Naive thymus-derived CD4-positive, alpha-beta T cell (primary cell): ENCODE measurements at regions of chr3 and their contacts with region 1.

Region 1: GRCh38 chr3:59575113-59576001 is 525.5 kb upstream of the CFAP20DC start:
- DNase-seq: peak; percentile 68 to 92 (median 82)
- ATAC-seq: peak; percentile 86
- H3K4me3 ChIP-seq: no peak overlapping the region
- H3K4me3 Mint-ChIP-seq: peak overlapping the region in 1 of 10 donors; percentile 37
- H3K27ac ChIP-seq: no peak overlapping the region
- H3K27ac Mint-ChIP-seq: peak overlapping the region in 1 of 9 donors; percentile 65
- H3K4me1 ChIP-seq: peaks cover 0 to 3% of the 10 kb centered on the region in 2 donors
- H3K4me1 Mint-ChIP-seq: peaks cover 3 to 20% (median 11%) of the 10 kb centered on the region in 7 donors
- H3K27me3 ChIP-seq: no peaks in the 10 kb centered on the region
- H3K27me3 Mint-ChIP-seq: peaks cover 0 to 2% (median 0%) of the 10 kb centered on the region in 5 donors

Region 2: DNA sequence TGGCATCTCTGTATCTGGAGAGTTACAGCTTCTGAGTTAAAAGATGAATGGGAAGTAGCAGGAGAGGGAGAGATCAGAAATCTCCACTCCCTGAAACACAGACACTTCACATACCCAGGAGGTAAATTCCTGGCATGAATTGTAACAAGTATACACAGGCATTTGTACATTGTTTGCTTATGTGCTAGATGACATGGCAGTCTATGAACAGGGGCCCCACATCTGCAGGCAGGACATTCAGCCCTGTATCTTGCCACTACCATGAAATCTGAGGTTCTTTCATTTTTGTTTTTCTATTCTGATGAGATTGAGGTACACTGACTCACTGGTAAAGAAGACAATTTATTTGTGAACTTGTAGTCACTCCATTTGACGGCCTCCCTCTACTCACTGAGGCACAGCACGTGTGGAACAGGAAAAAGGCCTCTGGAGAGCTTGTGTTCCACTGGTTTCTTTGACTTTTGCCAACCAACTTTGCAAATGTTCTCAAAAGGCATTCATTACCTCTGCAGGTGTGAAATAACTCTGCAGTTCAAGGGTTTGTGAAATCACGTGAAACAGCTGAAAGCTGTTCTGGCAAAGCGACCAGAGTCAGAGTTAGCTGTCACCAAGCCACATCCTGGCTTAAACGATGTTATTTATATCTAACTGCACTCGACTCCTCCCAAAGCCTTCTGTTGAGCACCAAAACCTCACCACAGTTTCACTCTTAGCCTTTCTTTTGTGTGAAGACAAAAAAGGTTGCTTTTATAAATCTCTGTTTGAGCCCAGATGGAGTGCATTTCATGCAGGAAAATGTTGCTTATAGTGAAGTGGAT is 124.2 kb before region 1 on chr3:
- CTCF ChIA-PET with region 1: no interaction called
- POLR2A ChIA-PET with region 1: no interaction called
- intact Hi-C with region 1: loop called (anchors 2 to 5 kb)
- DNase-seq: peak in 8 of 9 donors; percentile 58 to 93 (median 86)
- ATAC-seq: peak; percentile 95
- H3K4me3 ChIP-seq: peak overlapping the region; percentile 30
- H3K4me3 Mint-ChIP-seq: peak overlapping the region; percentile 59 to 83 (median 77)
- H3K27ac ChIP-seq: peak overlapping the region; percentile 76
- H3K27ac Mint-ChIP-seq: peak overlapping the region; percentile 90 to 100 (median 97)
- H3K4me1 ChIP-seq: peaks cover 45 to 72% of the 10 kb centered on the region in 2 donors
- H3K4me1 Mint-ChIP-seq: peaks cover 52 to 94% (median 79%) of the 10 kb centered on the region in 7 donors
- H3K27me3 ChIP-seq: no peaks in the 10 kb centered on the region
- H3K27me3 Mint-ChIP-seq: no peaks in the 10 kb centered on the region

Region 3: DNA sequence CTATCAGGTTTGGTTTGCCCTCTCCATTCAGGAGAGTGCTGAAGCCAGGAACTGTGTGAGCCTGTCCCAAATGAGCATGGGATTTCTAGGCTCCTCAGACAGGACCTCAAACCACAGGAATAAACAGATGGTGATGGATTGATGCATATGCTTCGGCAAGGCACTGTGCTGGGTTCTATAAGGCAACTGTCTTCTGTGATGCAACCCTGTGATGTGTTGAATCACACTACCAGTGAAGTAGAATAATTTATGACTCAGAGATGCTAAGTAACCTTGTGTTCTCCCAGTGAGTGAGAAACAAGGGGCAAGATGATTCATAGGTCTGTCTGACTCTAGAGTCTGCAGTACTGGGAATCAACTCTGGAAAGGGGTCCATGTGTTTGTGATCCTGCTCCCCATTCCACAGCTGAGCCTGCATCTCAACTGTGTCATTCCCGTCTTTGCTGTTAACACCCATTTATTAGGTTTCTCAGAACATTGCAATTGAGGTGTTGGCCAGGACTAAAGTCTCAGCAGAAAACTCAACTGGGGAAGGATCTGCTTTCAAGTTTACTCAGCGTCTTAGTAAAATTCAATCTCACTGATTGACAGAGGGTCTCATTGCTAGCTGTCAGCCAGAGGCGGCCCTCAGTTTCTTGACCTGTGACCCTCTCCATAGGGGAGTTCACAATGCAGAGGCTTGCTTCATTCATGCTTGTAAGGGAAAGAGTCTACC is 15.5 kb before region 1 on chr3:
- CTCF ChIA-PET with region 1: no interaction called
- POLR2A ChIA-PET with region 1: no interaction called
- intact Hi-C with region 1: no loop called
- DNase-seq: peak in 1 of 9 donors; percentile 29
- ATAC-seq: peak; percentile 38
- H3K4me3 ChIP-seq: no peak overlapping the region
- H3K4me3 Mint-ChIP-seq: no peak overlapping the region
- H3K27ac ChIP-seq: no peak overlapping the region
- H3K27ac Mint-ChIP-seq: no peak overlapping the region
- H3K4me1 ChIP-seq: no peaks in the 10 kb centered on the region
- H3K4me1 Mint-ChIP-seq: peaks cover 8 to 31% (median 22%) of the 10 kb centered on the region in 7 donors
- H3K27me3 ChIP-seq: no peaks in the 10 kb centered on the region
- H3K27me3 Mint-ChIP-seq: no peaks in the 10 kb centered on the region

Region 4: DNA sequence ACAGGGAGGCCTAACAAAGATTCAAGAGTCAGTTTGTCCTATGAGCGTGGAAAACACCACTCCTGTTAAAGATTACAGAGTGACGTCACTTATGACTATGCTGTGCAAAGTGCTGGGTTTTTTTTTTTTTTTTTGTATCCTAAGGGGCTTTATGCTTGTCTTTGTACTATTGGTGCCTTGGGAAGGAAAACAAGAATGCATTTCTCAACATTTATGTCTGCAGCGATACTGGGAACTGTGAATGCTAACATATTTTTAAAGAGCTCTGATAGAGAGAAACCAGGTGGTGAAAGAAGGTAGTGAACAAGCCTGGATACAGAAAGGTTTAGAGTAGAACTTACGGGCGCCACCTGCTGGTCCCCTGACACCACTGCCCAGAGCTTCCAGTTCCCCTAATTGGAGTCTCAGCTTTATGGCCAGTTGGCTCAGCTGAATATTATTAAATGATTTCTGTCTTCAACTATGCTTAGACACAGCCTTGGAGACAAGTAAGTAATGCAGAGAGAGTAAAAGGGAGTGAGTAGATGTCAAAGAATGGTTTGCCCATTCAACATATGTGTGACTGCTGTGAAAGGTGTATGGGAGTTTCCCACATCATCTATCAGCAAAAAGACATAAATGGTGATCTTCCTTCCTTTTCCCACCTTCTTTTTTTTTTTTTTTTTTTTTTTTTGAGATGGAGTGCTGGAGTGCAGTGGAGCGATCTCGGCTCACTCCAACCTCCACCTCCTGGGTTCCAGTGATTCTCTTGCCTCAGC is 282.4 kb after region 1 on chr3:
- CTCF ChIA-PET with region 1: interaction called, 19 read pairs
- POLR2A ChIA-PET with region 1: interaction called, 3 read pairs
- intact Hi-C with region 1: loop called (anchors 1 kb)
- DNase-seq: peak; percentile 44 to 75 (median 67)
- ATAC-seq: peak; percentile 92
- H3K4me3 ChIP-seq: no peak overlapping the region
- H3K4me3 Mint-ChIP-seq: peak overlapping the region in 5 of 10 donors; percentile 6 to 46 (median 27)
- H3K27ac ChIP-seq: no peak overlapping the region
- H3K27ac Mint-ChIP-seq: peak overlapping the region in 6 of 9 donors; percentile 15 to 84 (median 29)
- H3K4me1 ChIP-seq: peaks cover 0 to 3% of the 10 kb centered on the region in 2 donors
- H3K4me1 Mint-ChIP-seq: peaks cover 7 to 66% (median 58%) of the 10 kb centered on the region in 7 donors
- H3K27me3 ChIP-seq: no peaks in the 10 kb centered on the region
- H3K27me3 Mint-ChIP-seq: no peaks in the 10 kb centered on the region

Region 5: DNA sequence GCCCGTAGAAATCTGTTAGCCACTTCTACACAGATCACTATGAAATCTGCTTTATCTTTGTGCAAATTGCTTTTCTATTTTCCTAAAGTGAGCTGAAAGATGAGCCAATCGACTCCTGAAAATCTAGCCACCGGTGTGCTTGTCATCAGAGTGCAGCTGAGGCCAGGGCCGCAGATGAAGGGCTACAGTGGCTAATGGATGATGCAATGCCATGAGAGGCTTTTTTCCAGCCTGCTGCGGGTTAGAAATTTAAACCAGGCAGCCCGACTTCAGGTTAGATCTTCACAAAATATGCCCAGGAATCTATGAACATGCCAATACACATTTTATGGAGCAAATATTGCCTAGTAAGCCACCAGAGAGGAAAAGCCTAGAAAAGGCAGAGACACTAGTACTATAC is 422.7 kb after region 1 on chr3:
- CTCF ChIA-PET with region 1: interaction called, 3 read pairs
- POLR2A ChIA-PET with region 1: no interaction called
- intact Hi-C with region 1: loop called in 1 of 2 experiments (anchors 5 kb)
- DNase-seq: no peak
- ATAC-seq: no peak
- H3K4me3 ChIP-seq: no peak overlapping the region
- H3K4me3 Mint-ChIP-seq: peak overlapping the region in 3 of 10 donors; percentile 13 to 52 (median 21)
- H3K27ac ChIP-seq: no peak overlapping the region
- H3K27ac Mint-ChIP-seq: peak overlapping the region in 7 of 9 donors; percentile 19 to 78 (median 67)
- H3K4me1 ChIP-seq: peaks cover 0 to 82% of the 10 kb centered on the region in 2 donors
- H3K4me1 Mint-ChIP-seq: peaks cover 30 to 98% (median 89%) of the 10 kb centered on the region in 7 donors
- H3K27me3 ChIP-seq: no peaks in the 10 kb centered on the region
- H3K27me3 Mint-ChIP-seq: no peaks in the 10 kb centered on the region

Region 6: DNA sequence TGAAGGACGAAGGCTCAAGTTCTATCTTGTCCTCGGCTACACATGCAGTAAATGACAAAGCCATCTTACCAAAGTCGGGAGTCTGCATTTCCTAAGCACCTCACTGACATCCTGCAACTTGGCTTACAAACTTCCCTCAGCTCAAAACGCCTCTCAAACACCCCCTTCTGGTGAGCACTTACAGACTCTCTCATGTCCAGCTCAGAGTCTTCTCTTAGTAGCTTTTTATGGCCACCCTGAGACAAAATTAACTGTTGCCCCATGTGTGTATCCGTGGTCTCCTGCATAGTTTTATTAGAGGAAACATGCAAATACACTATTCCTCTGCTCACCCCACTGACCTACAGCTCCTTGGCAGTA is 856.2 kb after region 1 on chr3:
- CTCF ChIA-PET with region 1: interaction called, 15 read pairs
- POLR2A ChIA-PET with region 1: no interaction called
- intact Hi-C with region 1: loop called in 1 of 2 experiments (anchors 1 kb)
- DNase-seq: peak in 4 of 9 donors; percentile 13 to 23 (median 19)
- ATAC-seq: peak; percentile 38
- H3K4me3 ChIP-seq: no peak overlapping the region
- H3K4me3 Mint-ChIP-seq: peak overlapping the region in 4 of 10 donors; percentile 22 to 59 (median 46)
- H3K27ac ChIP-seq: no peak overlapping the region
- H3K27ac Mint-ChIP-seq: peak overlapping the region in 2 of 9 donors; percentile 21 to 60
- H3K4me1 ChIP-seq: no peaks in the 10 kb centered on the region
- H3K4me1 Mint-ChIP-seq: peaks cover 0 to 34% (median 27%) of the 10 kb centered on the region in 7 donors
- H3K27me3 ChIP-seq: peaks cover 0 to 5% of the 10 kb centered on the region in 2 donors
- H3K27me3 Mint-ChIP-seq: no peaks in the 10 kb centered on the region

Region 7: DNA sequence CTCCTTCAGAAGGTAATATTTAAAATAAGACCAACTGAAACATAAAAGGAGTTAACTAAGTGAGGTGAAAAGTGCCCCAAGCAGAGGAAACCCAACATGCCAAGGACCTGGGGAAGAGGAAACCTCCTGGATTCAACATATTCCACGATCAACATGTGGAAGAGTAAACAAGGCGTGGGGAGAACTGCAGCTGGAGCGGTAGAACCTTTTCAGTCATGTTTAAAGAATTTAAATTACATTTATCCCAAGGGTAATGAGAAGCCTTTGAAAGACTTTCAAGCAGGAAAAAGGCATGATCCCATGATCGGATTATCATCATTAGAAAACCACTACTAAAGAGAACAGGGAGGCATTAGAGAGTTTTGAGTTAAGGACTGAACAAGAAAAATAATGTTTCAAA is 1345.2 kb after region 1 on chr3:
- CTCF ChIA-PET with region 1: no interaction called
- POLR2A ChIA-PET with region 1: no interaction called
- intact Hi-C with region 1: no loop called
- DNase-seq: no peak
- ATAC-seq: no peak
- H3K4me3 ChIP-seq: no peak overlapping the region
- H3K4me3 Mint-ChIP-seq: no peak overlapping the region
- H3K27ac ChIP-seq: no peak overlapping the region
- H3K27ac Mint-ChIP-seq: no peak overlapping the region
- H3K4me1 ChIP-seq: no peaks in the 10 kb centered on the region
- H3K4me1 Mint-ChIP-seq: no peaks in the 10 kb centered on the region
- H3K27me3 ChIP-seq: no peaks in the 10 kb centered on the region
- H3K27me3 Mint-ChIP-seq: no peaks in the 10 kb centered on the region

Region 8: DNA sequence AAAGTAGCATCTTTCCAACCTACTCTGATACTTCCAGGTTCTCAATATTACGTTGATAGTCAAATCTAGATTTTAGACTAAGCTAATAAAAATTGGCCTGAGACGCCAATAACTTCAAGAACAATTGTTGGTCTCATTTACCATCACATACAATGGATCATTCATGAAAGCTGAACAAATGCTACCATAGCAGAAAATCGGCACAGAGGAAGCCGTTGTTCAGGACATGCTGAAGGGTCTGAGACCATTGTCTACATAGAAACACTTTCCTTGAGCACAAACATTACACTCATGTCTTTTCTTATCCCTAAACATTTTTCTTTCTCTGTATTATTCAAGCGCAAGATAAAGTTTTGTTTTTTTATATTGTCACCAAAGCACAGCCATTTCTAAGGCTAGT is 1713.1 kb after region 1 on chr3:
- CTCF ChIA-PET with region 1: no interaction called
- POLR2A ChIA-PET with region 1: no interaction called
- intact Hi-C with region 1: loop called in 1 of 2 experiments (anchors 2 kb)
- DNase-seq: no peak
- ATAC-seq: no peak
- H3K4me3 ChIP-seq: no peak overlapping the region
- H3K4me3 Mint-ChIP-seq: no peak overlapping the region
- H3K27ac ChIP-seq: no peak overlapping the region
- H3K27ac Mint-ChIP-seq: no peak overlapping the region
- H3K4me1 ChIP-seq: no peaks in the 10 kb centered on the region
- H3K4me1 Mint-ChIP-seq: no peaks in the 10 kb centered on the region
- H3K27me3 ChIP-seq: no peaks in the 10 kb centered on the region
- H3K27me3 Mint-ChIP-seq: peaks cover 4 to 15% (median 5%) of the 10 kb centered on the region in 5 donors